ENCODE measurements at regions of chr15 and their contacts with region 1.

Region 1: GRCh38 chr15:88897456-88898194 is 2.3 kb upstream of the HAPLN3 start:
- DNase-seq: peak in 8 of 9 donors; percentile 74 to 85 (median 80)
- ATAC-seq: peak; percentile 75
- H3K4me3 ChIP-seq: peak overlapping the region; percentile 32
- H3K4me3 Mint-ChIP-seq: peak overlapping the region; percentile 24 to 83 (median 60)
- H3K27ac ChIP-seq: no peak overlapping the region
- H3K27ac Mint-ChIP-seq: peak overlapping the region in 8 of 9 donors; percentile 20 to 97 (median 80)
- H3K4me1 ChIP-seq: peaks cover 27 to 38% of the 10 kb centered on the region in 2 donors
- H3K4me1 Mint-ChIP-seq: peaks cover 28 to 62% (median 51%) of the 10 kb centered on the region in 7 donors
- H3K27me3 ChIP-seq: no peaks in the 10 kb centered on the region
- H3K27me3 Mint-ChIP-seq: no peaks in the 10 kb centered on the region

Region 2: GRCh38 chr15:88913017-88913849 is 15.6 kb after region 1 on chr15 and contains the start of gene MFGE8:
- CTCF ChIA-PET with region 1: interaction called, 3 read pairs
- POLR2A ChIA-PET with region 1: interaction called, 3 read pairs
- intact Hi-C with region 1: loop called in 1 of 2 experiments (anchors 1 kb)
- DNase-seq: peak; percentile 59 to 77 (median 73)
- ATAC-seq: peak; percentile 93
- H3K4me3 ChIP-seq: peak within 1 kb of the TSS; percentile 82
- H3K4me3 Mint-ChIP-seq: peak within 1 kb of the TSS; percentile 87 to 99 (median 96)
- H3K27ac ChIP-seq: peak within 1 kb of the TSS; percentile 73
- H3K27ac Mint-ChIP-seq: peak within 1 kb of the TSS; percentile 71 to 96 (median 92)
- H3K4me1 ChIP-seq: peaks cover 0 to 15% of the 10 kb centered on the region in 2 donors
- H3K4me1 Mint-ChIP-seq: peaks cover 8 to 38% (median 33%) of the 10 kb centered on the region in 7 donors
- H3K27me3 ChIP-seq: no peaks in the 10 kb centered on the region
- H3K27me3 Mint-ChIP-seq: peaks cover 0 to 8% (median 0%) of the 10 kb centered on the region in 5 donors
- total RNA-seq, gene MFGE8: 26.3 to 106 (median 90.3) TPM

Region 3: GRCh38 chr15:89017370-89018066 is 119.9 kb after region 1 on chr15:
- CTCF ChIA-PET with region 1: interaction called, 7 read pairs
- POLR2A ChIA-PET with region 1: no interaction called
- intact Hi-C with region 1: loop called (anchors 1 kb)
- DNase-seq: peak; percentile 73 to 88 (median 82)
- ATAC-seq: peak; percentile 96
- H3K4me3 ChIP-seq: peak overlapping the region; percentile 31
- H3K4me3 Mint-ChIP-seq: peak overlapping the region; percentile 56 to 83 (median 70)
- H3K27ac ChIP-seq: no peak overlapping the region
- H3K27ac Mint-ChIP-seq: peak overlapping the region; percentile 26 to 91 (median 78)
- H3K4me1 ChIP-seq: peaks cover 10 to 13% of the 10 kb centered on the region in 2 donors
- H3K4me1 Mint-ChIP-seq: peaks cover under 1 to 28% (median 13%) of the 10 kb centered on the region in 7 donors
- H3K27me3 ChIP-seq: no peaks in the 10 kb centered on the region
- H3K27me3 Mint-ChIP-seq: peaks cover 0 to 45% (median 0%) of the 10 kb centered on the region in 5 donors

Region 4: GRCh38 chr15:89087830-89088604 is 190.4 kb after region 1 on chr15 and contains the start of gene ABHD2:
- CTCF ChIA-PET with region 1: interaction called, 8 read pairs
- POLR2A ChIA-PET with region 1: interaction called, 5 read pairs
- intact Hi-C with region 1: loop called (anchors 1 to 2 kb)
- DNase-seq: peak; percentile 93 to 99 (median 97)
- ATAC-seq: peak; percentile 97
- H3K4me3 ChIP-seq: peak within 1 kb of the TSS; percentile 78
- H3K4me3 Mint-ChIP-seq: peak within 1 kb of the TSS in 1 of 10 donors; percentile 8
- H3K27ac ChIP-seq: peak within 1 kb of the TSS; percentile 81
- H3K27ac Mint-ChIP-seq: peak within 1 kb of the TSS in 7 of 9 donors; percentile 90 to 100 (median 97)
- H3K4me1 ChIP-seq: peaks cover 26 to 29% of the 10 kb centered on the region in 2 donors
- H3K4me1 Mint-ChIP-seq: peaks cover 30 to 43% (median 32%) of the 10 kb centered on the region in 7 donors
- H3K27me3 ChIP-seq: no peaks in the 10 kb centered on the region
- H3K27me3 Mint-ChIP-seq: no peaks in the 10 kb centered on the region
- total RNA-seq, gene ABHD2: 43.6 to 85.0 (median 67.7) TPM

Region 5: DNA sequence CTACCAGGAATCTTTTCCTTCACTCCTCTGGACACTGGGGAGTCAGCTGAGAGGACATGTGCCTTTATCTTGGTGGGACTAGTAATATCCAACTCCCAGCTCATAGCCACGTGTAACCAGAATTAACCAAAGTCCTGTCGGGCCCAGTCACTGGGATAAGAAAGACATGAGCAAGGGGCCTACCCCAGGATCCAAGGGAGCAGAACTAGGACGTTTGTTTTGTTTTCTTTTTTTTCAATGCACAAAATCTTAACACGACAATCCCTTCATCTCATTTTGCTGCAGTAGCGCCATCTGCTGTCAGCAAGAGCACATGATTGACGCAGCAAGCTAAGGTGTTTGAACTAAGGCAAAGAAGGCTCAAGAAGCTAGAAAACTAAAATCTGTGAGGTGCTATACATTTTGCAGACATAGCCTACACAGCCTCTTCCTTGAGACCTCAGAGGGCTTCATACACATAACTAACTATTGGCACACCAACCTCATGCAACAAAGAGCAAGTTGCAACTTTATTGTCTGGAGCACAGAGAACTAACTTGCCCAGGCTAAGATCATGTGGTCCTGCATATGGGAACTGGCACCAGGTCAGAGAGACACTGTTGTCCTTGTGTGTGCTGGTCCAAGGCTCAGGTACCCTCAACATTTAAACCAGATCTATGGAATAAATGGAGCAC is 280.1 kb after region 1 on chr15:
- CTCF ChIA-PET with region 1: interaction called, 10 read pairs
- POLR2A ChIA-PET with region 1: no interaction called
- intact Hi-C with region 1: loop called (anchors 1 kb)
- DNase-seq: peak; percentile 15 to 66 (median 48)
- ATAC-seq: peak; percentile 63
- H3K4me3 ChIP-seq: no peak overlapping the region
- H3K4me3 Mint-ChIP-seq: no peak overlapping the region
- H3K27ac ChIP-seq: no peak overlapping the region
- H3K27ac Mint-ChIP-seq: peak overlapping the region in 2 of 9 donors; percentile 46 to 72
- H3K4me1 ChIP-seq: no peaks in the 10 kb centered on the region
- H3K4me1 Mint-ChIP-seq: peaks cover 5 to 17% (median 7%) of the 10 kb centered on the region in 7 donors
- H3K27me3 ChIP-seq: no peaks in the 10 kb centered on the region
- H3K27me3 Mint-ChIP-seq: no peaks in the 10 kb centered on the region

Measured in naive thymus-derived CD4-positive, alpha-beta T cell (primary cell).